ENCODE measurements at regions of chr4 and their contacts with region 1.

Region 1: DNA sequence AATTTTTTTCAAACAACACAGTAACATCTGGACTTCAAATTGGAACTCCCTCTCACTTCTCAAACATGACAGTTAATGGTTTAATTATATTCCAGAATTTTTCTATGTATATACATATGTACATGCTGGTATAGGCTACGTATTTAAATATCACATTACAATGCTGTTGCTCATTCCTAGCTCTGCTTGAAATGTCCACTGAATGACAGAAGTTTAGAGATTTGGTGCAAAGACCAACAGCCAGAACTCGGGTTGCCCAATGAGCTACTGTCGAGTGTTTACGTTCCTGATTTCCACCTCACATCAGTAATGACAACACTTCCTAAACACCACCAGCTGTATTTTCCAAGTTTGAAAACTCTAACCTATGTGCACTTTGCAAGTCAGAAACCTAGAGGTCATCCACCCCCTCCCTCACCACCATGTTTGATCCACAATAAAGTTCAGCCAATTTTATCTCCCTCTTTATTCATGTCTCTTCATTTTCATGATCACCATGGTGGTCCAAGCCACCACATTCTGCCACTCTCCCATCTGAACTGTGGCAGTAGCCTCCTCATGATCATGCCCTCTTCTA is 49.3 kb upstream of the RPL34 start:
- DNase-seq: no peak
- ATAC-seq: no peak
- H3K4me3 ChIP-seq: no peak overlapping the region
- H3K27ac ChIP-seq: no peak overlapping the region
- H3K4me1 ChIP-seq: no peaks in the 10 kb centered on the region
- H3K27me3 ChIP-seq: no peaks in the 10 kb centered on the region; a peak in 1 of 4 replicates
- CTCF ChIP-seq: no peak
- EP300 ChIP-seq: no peak
- POLR2A ChIP-seq: no peak
- RAD21 ChIP-seq: no peak

Region 2: DNA sequence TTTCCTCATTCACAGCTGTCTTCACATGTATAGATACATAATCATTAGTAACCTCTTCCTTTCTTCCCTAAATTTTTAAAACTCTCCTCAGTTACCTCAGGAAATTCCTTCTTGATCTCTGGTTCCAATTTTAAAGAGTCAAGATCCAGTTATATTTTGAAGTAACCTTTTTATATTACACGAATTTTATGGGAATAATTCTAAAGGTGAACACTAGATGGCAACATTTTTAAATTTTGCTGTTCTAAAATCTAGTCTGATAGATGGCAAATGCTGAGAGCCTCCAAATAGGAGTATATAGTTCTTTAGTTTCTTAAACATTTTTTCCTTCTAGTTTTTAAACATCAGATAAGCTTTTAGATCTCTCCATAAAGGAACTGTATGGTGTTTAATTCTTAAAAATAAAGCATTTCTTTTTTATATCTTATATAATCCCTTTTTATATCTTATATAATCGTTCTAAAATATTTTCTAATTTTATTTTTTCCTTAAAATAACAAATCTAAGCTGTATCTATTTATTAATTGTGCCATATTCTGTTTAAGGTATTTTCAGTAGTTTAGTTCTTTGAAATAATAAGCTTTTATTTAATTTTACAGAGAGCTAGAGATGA is 813.1 kb before region 1 on chr4:
- CTCF ChIA-PET with region 1: interaction called, 12 read pairs
- POLR2A ChIA-PET with region 1: no interaction called
- RAD21 ChIA-PET with region 1: interaction called, 6 read pairs
- SMC1A ChIA-PET with region 1: no interaction called
- in situ Hi-C with region 1: no loop called
- intact Hi-C with region 1: loop called (anchors 5 kb)
- DNase-seq: no peak
- ATAC-seq: 0 out of 3 replicates have a peak, but pooled peaks have one; percentile 38
- H3K4me3 ChIP-seq: no peak overlapping the region
- H3K27ac ChIP-seq: no peak overlapping the region
- H3K4me1 ChIP-seq: no peaks in the 10 kb centered on the region
- H3K27me3 ChIP-seq: no peaks in the 10 kb centered on the region
- CTCF ChIP-seq: peak; percentile 11 to 38 (median 24); a peak in 3 of 6 replicates
- EP300 ChIP-seq: no peak
- POLR2A ChIP-seq: no peak
- RAD21 ChIP-seq: peak; percentile 32; the same call in 1 of the 2 replicates

Region 3: DNA sequence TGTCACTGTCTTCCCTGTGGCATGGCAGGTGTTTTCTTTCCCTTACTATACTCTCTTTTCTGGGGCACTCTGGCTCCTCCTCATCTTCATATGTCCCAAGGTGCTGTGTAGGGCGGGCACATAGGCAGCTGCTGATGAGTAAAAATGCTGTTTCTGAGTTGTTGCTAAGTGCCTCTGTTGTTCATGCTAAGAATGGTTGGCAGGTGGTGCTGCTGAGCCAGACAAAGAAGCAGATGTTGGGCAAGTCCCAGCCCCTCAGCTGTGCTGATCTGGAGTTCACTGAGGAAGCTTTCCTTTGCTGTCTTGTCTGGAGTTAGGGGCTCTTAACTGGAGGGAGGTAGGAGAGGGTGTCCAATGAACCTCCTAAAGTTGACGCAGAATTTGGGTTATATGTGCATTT is 540.7 kb before region 1 on chr4:
- CTCF ChIA-PET with region 1: interaction called, 57 read pairs
- POLR2A ChIA-PET with region 1: interaction called, 3 read pairs
- RAD21 ChIA-PET with region 1: interaction called, 36 read pairs
- SMC1A ChIA-PET with region 1: interaction called, 42 read pairs
- in situ Hi-C with region 1: no loop called
- intact Hi-C with region 1: loop called (anchors 1 kb)
- DNase-seq: no peak
- ATAC-seq: peak; percentile 99
- H3K4me3 ChIP-seq: no peak overlapping the region
- H3K27ac ChIP-seq: no peak overlapping the region
- H3K4me1 ChIP-seq: no peaks in the 10 kb centered on the region
- H3K27me3 ChIP-seq: no peaks in the 10 kb centered on the region
- CTCF ChIP-seq: peak; percentile 61 to 76 (median 63)
- EP300 ChIP-seq: no peak
- POLR2A ChIP-seq: no peak
- RAD21 ChIP-seq: peak; percentile 96

Region 4: GRCh38 chr4:108053251-108053711 is 517.8 kb before region 1 on chr4:
- CTCF ChIA-PET with region 1: interaction called, 11 read pairs
- POLR2A ChIA-PET with region 1: no interaction called
- RAD21 ChIA-PET with region 1: interaction called, 6 read pairs
- SMC1A ChIA-PET with region 1: interaction called, 13 read pairs
- in situ Hi-C with region 1: no loop called
- intact Hi-C with region 1: no loop called
- DNase-seq: no peak
- ATAC-seq: peak; percentile 93
- H3K4me3 ChIP-seq: no peak overlapping the region
- H3K27ac ChIP-seq: no peak overlapping the region
- H3K4me1 ChIP-seq: no peaks in the 10 kb centered on the region
- H3K27me3 ChIP-seq: no peaks in the 10 kb centered on the region
- CTCF ChIP-seq: no peak
- EP300 ChIP-seq: no peak
- POLR2A ChIP-seq: no peak
- RAD21 ChIP-seq: no peak

Region 5: DNA sequence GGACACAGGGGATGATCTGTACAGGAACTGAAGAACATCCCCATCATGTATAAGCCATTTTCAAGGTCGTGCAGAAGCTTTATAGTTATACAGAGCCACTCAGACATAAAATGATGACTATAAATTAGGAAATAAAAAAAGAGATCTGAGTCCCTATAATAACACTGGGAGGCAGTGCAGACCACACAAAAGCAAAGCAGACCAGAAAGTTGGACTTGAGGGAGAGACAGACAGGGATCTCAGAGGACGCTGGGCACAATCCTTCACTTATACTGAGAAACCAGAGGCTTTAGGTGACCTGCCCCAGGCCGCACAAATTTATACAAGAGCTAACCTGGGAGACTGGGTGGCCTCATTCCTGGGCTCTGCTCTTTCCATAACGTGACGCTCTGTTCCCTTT is 510.9 kb before region 1 on chr4:
- CTCF ChIA-PET with region 1: interaction called, 10 read pairs
- POLR2A ChIA-PET with region 1: no interaction called
- RAD21 ChIA-PET with region 1: interaction called, 13 read pairs
- SMC1A ChIA-PET with region 1: interaction called, 13 read pairs
- in situ Hi-C with region 1: no loop called
- intact Hi-C with region 1: no loop called
- DNase-seq: no peak
- ATAC-seq: no peak; the same call in 2 of the 3 replicates
- H3K4me3 ChIP-seq: no peak overlapping the region
- H3K27ac ChIP-seq: no peak overlapping the region
- H3K4me1 ChIP-seq: no peaks in the 10 kb centered on the region
- H3K27me3 ChIP-seq: no peaks in the 10 kb centered on the region
- CTCF ChIP-seq: peak in 2 of 3 experiments; percentile 23 to 51; a peak in 4 of 6 replicates
- EP300 ChIP-seq: no peak
- POLR2A ChIP-seq: no peak
- RAD21 ChIP-seq: peak; percentile 67

Region 6: GRCh38 chr4:108560616-108561015 is 10.5 kb before region 1 on chr4:
- CTCF ChIA-PET with region 1: interaction called, 10 read pairs
- POLR2A ChIA-PET with region 1: no interaction called
- RAD21 ChIA-PET with region 1: no interaction called
- SMC1A ChIA-PET with region 1: interaction called, 5 read pairs
- in situ Hi-C with region 1: no loop called
- intact Hi-C with region 1: no loop called
- DNase-seq: no peak
- ATAC-seq: no peak
- H3K4me3 ChIP-seq: no peak overlapping the region
- H3K27ac ChIP-seq: no peak overlapping the region
- H3K4me1 ChIP-seq: no peaks in the 10 kb centered on the region
- H3K27me3 ChIP-seq: no peaks in the 10 kb centered on the region
- CTCF ChIP-seq: no peak
- EP300 ChIP-seq: no peak
- POLR2A ChIP-seq: no peak
- RAD21 ChIP-seq: no peak

Region 7: DNA sequence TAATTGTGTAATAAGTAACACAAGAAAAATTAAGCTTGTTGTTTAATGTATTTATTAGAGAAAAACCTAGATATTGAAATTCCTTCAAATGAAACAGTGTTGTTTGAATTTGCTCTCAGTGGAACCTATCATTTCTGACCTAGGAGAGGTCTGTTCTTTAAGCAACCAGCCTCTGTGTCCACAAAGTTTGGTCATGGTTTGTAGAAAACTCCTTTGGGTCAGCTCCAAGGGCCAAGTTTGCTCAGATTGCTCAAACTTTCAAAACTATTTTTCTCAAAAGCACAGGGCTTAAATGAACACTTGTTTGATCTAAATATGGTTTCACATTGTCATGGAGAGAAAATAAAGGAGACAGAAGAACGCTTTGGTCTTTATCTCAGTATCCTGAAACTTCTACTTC is 19.7 kb after region 1 on chr4:
- CTCF ChIA-PET with region 1: interaction called, 11 read pairs
- POLR2A ChIA-PET with region 1: interaction called, 3 read pairs
- RAD21 ChIA-PET with region 1: interaction called, 5 read pairs
- SMC1A ChIA-PET with region 1: interaction called, 3 read pairs
- in situ Hi-C with region 1: no loop called
- intact Hi-C with region 1: no loop called
- DNase-seq: no peak
- ATAC-seq: no peak
- H3K4me3 ChIP-seq: no peak overlapping the region
- H3K27ac ChIP-seq: no peak overlapping the region
- H3K4me1 ChIP-seq: no peaks in the 10 kb centered on the region
- H3K27me3 ChIP-seq: no peaks in the 10 kb centered on the region
- CTCF ChIP-seq: no peak
- EP300 ChIP-seq: no peak
- POLR2A ChIP-seq: no peak
- RAD21 ChIP-seq: no peak

Measured in GM12878 (cell line).